Activated CD8-positive, alpha-beta T cell treated with anti-CD3 and anti-CD28 coated beads for 36 hours (primary cell): ENCODE measurements at regions of chr17 and their contacts with region 1.

Region 1: DNA sequence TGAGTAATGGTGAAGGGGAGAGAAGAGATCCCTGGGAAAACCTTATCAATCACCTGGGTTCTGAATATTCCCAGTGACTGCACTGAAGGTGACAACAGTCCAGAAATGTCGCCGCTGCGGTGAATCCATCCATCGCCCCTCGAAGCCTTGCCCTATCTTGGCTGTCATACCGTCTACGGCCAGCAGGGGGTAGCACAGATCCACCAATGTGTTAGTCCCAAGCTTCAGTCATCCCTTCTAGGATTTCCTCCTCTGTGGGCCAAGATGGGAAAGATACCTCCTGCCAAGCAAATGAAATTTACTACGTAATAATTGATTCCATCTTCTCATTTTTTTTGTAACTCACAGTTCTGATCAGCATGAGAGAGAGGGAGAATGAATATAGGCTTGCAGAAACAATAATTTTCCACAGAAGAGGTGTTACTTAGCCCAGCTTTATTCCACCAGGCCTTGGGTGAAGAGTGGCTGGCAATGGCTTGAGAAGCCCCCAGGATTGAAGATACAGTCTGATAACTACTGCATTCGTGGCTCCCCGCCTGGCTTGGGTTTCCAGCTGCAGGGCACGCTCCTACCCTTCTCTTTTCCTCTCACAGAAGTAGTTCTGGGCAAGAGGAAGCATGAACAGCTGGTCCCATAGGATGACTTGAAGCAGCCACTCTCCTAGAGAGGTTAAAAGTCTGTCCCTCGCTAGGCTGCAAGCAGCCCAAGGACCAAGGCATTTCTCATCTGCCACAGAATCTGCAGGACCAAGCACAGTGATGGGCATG is 2.6 kb upstream of the FMNL1 start:
- DNase-seq: peak; percentile 94
- ATAC-seq: peak; percentile 12
- H3K4me3 Mint-ChIP-seq: peak overlapping the region; percentile 94
- H3K27ac Mint-ChIP-seq: peak overlapping the region; percentile 63
- H3K4me1 Mint-ChIP-seq: peaks cover 26% of the 10 kb centered on the region
- H3K27me3 Mint-ChIP-seq: no peaks in the 10 kb centered on the region
- CTCF ChIP-seq: peak; percentile 99

Region 2: DNA sequence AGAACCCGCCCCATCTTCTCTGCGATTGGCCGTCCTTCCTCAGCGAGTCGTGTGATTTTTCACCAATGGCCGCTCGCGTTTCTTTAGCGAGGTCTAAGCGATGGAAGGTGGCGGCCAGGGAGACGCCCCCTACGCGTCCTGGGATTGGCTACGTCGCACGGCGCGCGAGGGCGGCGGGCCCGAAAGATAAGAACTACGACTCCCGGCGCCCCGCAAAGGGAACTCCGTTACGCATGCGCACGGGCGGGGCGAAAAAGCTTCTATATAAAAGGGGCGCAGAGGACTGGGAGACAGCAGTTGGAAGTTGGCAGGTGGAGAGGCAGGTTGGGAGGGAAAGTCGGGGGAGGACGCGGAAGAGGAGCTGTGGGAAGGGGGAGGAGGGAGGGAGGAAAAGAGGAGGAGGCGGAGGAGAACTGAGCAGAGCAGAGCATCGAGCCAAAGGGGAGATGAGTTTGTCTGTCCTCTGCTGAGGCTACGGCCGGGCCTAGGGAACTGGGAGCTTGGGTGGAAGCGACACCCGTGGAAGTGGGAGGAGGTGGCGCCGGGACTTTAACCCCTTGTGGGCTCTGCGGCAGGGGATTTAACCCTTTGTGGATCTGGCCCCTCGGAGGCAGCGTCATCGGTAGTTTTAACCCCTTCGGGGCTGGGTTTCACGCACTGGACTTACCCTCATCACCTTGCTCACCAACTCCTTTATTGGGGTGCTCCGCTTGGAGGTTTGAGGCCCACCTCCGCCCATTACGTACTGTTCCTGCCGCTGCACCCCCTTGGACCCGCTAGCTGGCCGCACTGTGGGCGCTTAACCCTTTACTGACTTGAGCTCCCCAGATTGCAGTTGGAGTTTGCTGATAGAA is 70.7 kb before region 1 on chr17 and contains the start of gene HEXIM1:
- CTCF ChIA-PET with region 1: interaction called, 58 read pairs
- POLR2A ChIA-PET with region 1: interaction called, 39 read pairs
- intact Hi-C with region 1: no loop called
- DNase-seq: peak; percentile 99
- ATAC-seq: peak; percentile 82
- H3K4me3 Mint-ChIP-seq: peak within 1 kb of the TSS; percentile 98
- H3K27ac Mint-ChIP-seq: peak within 1 kb of the TSS; percentile 100
- H3K4me1 Mint-ChIP-seq: peaks cover 40% of the 10 kb centered on the region
- H3K27me3 Mint-ChIP-seq: no peaks in the 10 kb centered on the region
- CTCF ChIP-seq: no peak
- total RNA-seq, gene HEXIM1: 22.6 to 23.5 TPM

Region 3: DNA sequence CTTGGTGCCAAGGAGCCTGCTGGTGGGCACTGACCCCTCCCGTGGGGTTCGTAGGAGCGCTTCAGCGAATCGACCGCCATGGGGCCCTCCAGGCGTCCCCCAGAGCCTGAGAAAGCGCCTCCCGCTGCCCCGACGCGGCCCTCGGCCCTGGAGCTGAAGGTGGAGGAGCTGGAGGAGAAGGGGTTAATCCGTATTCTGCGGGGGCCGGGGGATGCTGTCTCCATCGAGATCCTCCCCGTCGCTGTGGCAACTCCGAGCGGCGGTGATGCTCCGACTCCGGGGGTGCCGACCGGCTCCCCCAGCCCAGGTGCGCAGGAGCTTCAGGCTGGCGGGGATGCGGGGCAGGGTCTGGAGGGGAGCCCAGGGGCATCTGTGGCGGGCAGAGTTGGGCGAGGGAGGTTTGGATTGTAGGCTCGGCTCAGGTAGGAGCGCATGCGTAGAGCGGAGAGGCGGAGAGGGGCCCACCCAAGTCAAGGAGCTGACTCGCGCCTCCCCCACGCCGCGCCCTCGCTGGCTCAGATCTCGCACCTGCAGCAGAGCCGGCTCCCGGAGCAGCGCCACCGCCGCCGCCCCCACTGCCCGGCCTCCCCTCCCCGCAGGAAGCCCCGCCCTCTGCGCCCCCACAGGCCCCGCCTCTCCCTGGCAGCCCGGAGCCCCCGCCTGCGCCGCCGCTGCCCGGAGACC is 22.4 kb after region 1 on chr17:
- CTCF ChIA-PET with region 1: interaction called, 406 read pairs
- POLR2A ChIA-PET with region 1: interaction called, 399 read pairs
- intact Hi-C with region 1: no loop called
- DNase-seq: no peak
- ATAC-seq: no peak
- H3K4me3 Mint-ChIP-seq: no peak overlapping the region
- H3K27ac Mint-ChIP-seq: no peak overlapping the region
- H3K4me1 Mint-ChIP-seq: peaks cover 27% of the 10 kb centered on the region
- H3K27me3 Mint-ChIP-seq: no peaks in the 10 kb centered on the region
- CTCF ChIP-seq: no peak

Region 4: GRCh38 chr17:45261577-45262515 is 42.8 kb after region 1 on chr17 and contains the start of gene SPATA32:
- CTCF ChIA-PET with region 1: interaction called, 27 read pairs
- POLR2A ChIA-PET with region 1: interaction called, 4 read pairs
- intact Hi-C with region 1: loop called (anchors 5 kb)
- DNase-seq: peak; percentile 91
- ATAC-seq: peak; percentile 94
- H3K4me3 Mint-ChIP-seq: peak within 1 kb of the TSS; percentile 76
- H3K27ac Mint-ChIP-seq: peak within 1 kb of the TSS; percentile 85
- H3K4me1 Mint-ChIP-seq: peaks cover 34% of the 10 kb centered on the region
- H3K27me3 Mint-ChIP-seq: no peaks in the 10 kb centered on the region
- CTCF ChIP-seq: no peak
- total RNA-seq, gene SPATA32: 0.27 to 0.63 TPM

Region 5: DNA sequence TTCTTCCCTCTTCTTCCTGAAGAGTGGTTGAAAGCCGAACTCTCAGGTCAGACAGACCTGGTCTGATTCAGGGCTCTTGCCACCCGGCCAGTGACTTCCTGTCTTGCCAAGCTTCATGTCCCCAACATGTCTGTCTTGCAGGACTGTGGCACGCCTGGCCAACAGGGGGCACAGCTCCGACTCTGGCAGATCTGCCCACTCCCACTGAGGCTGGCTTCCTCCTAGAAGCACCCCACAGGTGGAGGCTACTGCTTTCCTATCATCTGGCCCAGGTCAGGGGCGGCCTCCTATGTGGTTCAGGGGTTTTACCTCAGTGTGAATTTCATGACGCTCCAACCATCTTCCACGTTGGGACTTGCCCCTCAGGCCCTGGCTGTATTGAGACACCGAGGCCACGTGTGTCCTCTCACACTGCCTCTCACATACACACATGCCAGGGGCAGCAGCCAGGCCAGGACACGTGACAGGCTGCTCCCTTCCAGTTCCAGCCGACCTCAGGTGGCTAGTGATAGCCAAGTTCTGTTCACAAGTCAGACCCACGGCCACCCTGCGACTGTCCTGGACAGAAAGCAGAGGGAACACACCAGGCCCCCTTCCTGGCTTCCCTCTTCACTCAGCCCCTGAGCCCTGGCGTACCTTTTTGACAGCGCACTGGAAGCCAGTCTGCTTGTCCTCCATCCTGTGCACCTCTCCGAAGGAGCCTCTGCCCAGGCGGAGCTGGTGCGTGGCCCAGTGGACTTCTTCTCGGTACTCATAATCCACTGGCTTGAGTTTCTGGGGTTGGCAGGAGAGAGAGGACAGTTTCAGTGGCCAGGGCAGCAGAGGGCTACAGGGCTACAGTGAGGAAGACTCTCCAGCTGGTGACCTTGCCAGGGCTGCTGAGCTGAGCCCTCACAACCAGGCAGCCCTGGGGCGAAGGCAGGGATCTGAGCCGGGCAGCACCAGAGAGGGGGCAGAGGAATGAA is 65.4 kb after region 1 on chr17:
- CTCF ChIA-PET with region 1: interaction called, 15 read pairs
- POLR2A ChIA-PET with region 1: no interaction called
- intact Hi-C with region 1: no loop called
- DNase-seq: peak; percentile 65
- ATAC-seq: peak; percentile 60
- H3K4me3 Mint-ChIP-seq: no peak overlapping the region
- H3K27ac Mint-ChIP-seq: peak overlapping the region; percentile 86
- H3K4me1 Mint-ChIP-seq: peaks cover 25% of the 10 kb centered on the region
- H3K27me3 Mint-ChIP-seq: no peaks in the 10 kb centered on the region
- CTCF ChIP-seq: no peak

Region 6: GRCh38 chr17:45317112-45317928 is 98.2 kb after region 1 on chr17:
- CTCF ChIA-PET with region 1: interaction called, 47 read pairs
- POLR2A ChIA-PET with region 1: interaction called, 211 read pairs
- intact Hi-C with region 1: loop called (anchors 5 kb)
- DNase-seq: peak; percentile 100
- ATAC-seq: peak; percentile 81
- H3K4me3 Mint-ChIP-seq: peak overlapping the region; percentile 81
- H3K27ac Mint-ChIP-seq: peak overlapping the region; percentile 88
- H3K4me1 Mint-ChIP-seq: peaks cover 60% of the 10 kb centered on the region
- H3K27me3 Mint-ChIP-seq: no peaks in the 10 kb centered on the region
- CTCF ChIP-seq: no peak